Right ventricle myocardium inferior (tissue), 1 donor: ENCODE measurements at regions of chr7 and their contacts with region 1.

Region 1: DNA sequence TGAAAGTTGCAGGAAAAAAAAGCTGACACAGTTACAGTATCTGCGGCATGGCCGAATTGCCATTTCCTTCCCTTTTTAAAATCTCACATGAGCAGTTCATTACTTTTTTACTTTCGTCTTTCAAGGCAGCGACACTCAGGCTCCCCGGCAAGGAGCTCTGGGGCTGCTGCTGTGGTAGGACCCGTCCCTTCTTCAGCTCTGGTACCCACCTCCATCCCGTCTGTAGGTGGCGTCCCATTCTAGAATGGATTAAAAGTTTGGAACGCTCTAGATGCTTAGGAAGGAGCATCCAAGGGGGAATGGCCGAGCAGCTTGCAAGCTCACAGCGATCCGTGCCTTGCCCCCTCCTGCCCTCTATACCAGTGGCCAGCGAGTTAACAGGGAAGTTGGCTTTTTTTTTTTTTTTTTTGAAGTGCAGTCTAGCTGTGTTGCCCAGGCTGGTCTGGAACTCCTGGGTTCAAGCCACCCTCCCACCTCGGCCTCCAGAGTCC is 22.8 kb upstream of the TTYH3 start:
- DNase-seq: no peak
- ATAC-seq: no peak

Region 2: GRCh38 chr7:2626498-2627117 is 17.6 kb after region 1 on chr7:
- intact Hi-C with region 1: loop called (anchors 2 kb)
- DNase-seq: no peak
- ATAC-seq: peak; percentile 11

Region 3: DNA sequence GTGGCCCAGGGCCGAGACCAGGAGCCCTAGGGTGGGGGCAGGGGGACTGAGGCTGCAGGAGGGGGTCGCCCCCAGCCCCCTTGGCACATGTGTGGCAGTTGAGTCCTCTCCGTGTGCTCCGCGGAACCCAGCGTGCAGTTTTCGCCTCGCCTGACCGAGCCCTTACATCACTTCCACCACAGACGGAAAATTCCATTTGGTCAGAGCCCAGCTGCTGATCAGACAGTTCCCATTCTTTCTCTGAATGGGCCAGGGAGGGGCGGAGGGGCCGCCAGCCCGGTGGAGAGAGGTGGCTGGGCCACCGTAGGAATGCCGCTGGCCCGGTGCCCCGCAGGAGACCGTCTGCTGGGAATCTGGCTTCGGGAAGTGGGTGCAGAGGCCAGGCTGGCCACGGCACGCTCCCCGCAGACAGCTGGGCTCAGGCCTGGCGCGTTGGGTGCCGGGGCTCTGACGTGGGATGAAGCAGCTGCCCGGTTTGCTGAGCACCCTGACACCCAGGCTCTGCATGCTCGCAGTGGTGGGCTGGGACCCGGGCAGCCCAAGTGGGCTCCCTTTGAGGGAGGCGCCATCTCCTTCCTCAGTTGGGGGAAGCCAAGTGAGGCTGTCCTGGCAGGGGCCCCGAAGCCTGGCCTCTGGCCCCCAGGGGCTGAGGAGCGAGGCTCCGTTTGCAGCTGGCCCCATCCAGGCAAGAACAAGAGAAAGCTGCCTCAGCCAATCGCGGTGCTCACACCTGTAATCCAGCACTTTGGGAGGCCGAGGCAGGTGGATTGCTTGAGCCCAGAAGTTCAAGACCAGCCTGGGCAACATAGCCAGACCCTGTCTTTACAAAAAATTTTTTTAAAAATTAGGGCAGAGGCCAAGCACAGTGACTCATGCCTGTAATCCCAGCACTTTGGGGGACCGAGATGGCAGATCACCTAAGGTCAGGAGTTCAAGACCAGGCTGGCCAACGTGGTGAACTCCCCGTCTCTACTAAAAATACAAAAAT is 32.7 kb after region 1 on chr7:
- intact Hi-C with region 1: loop called (anchors 5 kb)
- DNase-seq: peak; percentile 93
- ATAC-seq: peak; percentile 77

Region 4: GRCh38 chr7:2660585-2661408 is 51.8 kb after region 1 on chr7:
- intact Hi-C with region 1: loop called (anchors 5 kb)
- DNase-seq: no peak
- ATAC-seq: no peak

Region 5: DNA sequence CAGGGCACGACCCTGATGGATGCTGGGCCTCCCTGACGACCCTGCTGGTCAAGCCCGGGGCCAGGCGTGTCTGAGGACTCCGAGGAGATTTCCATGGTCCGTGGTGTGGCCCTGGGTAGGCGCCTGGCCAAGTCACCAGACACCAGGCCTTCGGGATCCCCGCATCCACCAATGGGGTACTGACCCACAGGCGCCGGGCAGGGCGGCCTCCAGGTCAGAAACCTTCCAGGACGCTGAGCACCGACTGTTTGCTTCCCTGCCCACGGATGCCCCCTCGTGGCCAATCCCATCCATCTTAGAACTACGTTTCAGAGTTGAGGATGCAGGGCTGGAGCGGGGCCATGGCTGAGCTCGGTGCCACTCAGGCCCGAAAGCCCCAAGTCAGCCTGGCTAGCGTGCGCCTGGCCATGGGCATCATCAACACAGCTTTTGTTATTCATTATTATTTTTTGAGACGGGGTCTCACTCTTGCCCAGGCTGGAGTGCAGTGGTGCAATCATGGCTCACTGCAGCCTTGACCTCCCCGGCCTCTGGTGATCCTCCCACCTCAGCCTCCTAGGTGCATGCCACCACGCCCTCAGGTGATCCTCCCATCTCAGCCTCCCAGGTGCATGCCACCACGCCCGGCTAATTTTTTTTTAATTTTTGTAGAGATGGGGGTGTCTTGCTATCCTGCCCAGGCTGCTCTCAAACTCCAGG is 72.0 kb after region 1 on chr7:
- intact Hi-C with region 1: no loop called
- DNase-seq: peak; percentile 91
- ATAC-seq: peak; percentile 75